ENCODE measurements at regions of chr1 and their contacts with region 1.

Region 1: GRCh38 chr1:117942293-117942692 is 12.8 kb downstream of the WDR3 start:
- DNase-seq: no peak
- H3K4me3 Mint-ChIP-seq: no peak overlapping the region
- H3K27ac Mint-ChIP-seq: no peak overlapping the region
- H3K4me1 Mint-ChIP-seq: no peaks in the 10 kb centered on the region
- H3K27me3 Mint-ChIP-seq: no peaks in the 10 kb centered on the region
- CTCF ChIP-seq: no peak

Region 2: DNA sequence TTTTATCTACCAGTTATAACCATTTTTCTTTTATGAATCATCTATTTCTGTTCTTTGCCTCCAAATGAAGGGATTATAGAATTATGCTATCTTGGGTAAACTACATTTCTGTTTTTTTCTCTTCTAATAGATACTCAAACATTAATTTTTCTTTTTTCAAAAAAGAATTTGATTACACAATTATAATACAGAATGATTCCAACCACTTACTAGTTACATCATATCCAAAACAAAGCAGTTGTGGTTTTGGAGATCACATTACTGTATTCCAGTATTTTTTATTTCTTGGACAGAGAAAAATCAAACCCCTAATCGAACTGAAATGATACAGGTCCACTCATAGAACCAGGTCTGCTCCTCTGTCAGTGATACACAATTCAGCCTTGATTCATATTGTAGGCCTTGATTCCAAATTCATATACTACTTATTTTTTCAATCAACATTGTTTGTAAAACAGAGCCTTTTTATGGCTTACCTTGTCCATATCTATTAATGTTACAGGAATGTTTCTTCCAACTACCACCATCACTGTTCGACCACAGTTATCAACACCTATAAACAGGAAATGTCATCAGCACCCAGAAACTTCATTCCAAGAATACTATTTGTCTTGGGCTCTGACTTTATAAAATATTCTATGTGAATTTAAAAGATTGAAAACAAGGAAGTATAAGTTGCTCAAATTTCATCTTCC is 56.0 kb before region 1 on chr1:
- CTCF ChIA-PET with region 1: no interaction called
- intact Hi-C with region 1: loop called (anchors 10 kb)
- DNase-seq: no peak
- H3K4me3 Mint-ChIP-seq: no peak overlapping the region
- H3K27ac Mint-ChIP-seq: no peak overlapping the region
- H3K4me1 Mint-ChIP-seq: no peaks in the 10 kb centered on the region
- H3K27me3 Mint-ChIP-seq: no peaks in the 10 kb centered on the region
- CTCF ChIP-seq: no peak

Region 3: DNA sequence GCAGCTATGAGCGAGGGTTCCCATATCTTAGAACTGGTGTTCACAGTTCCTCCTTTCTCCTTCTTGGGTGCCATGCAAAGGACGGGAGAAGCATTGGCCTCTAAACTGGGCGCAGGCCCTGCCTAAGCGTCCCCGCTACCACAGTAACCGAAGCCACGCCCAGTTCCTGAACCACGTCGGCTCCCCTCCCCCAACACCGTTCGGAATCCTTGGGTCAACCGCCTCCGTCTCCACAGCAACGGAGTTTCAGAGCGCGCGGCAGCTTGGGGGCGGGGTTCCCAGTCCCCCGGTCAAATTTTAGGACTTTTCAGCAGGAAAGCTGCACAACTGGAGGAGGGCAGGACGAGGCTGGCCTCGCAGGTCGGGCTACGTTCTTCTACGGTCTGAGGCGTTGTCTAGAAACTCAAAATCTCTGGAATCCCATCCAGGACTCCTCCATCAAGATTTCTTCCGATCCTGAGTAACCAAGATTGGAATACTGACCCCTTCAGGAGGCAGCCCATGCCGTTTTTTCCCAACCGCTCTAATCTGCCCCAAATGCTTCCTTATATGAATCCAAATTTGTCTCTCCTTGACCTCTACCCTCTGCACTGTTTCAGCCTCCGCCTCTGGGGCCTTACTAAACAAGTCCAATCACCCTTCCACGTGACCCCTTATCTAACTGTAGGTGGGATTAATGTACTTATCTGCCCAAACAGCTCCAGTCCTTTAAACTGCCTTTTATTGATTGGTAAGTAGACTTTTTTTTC is 243.0 kb after region 1 on chr1 and contains the start of gene SPAG17:
- CTCF ChIA-PET with region 1: no interaction called
- intact Hi-C with region 1: no loop called
- DNase-seq: peak; percentile 76
- H3K4me3 Mint-ChIP-seq: peak within 1 kb of the TSS; percentile 70
- H3K27ac Mint-ChIP-seq: peak within 1 kb of the TSS; percentile 72
- H3K4me1 Mint-ChIP-seq: peaks cover 15% of the 10 kb centered on the region
- H3K27me3 Mint-ChIP-seq: no peaks in the 10 kb centered on the region
- CTCF ChIP-seq: no peak
- total RNA-seq, gene SPAG17: 0.33 and 1.3 TPM in 2 replicates